K562 (cell line): ENCODE measurements at regions of chr1 and their contacts with region 1.

Region 1: DNA sequence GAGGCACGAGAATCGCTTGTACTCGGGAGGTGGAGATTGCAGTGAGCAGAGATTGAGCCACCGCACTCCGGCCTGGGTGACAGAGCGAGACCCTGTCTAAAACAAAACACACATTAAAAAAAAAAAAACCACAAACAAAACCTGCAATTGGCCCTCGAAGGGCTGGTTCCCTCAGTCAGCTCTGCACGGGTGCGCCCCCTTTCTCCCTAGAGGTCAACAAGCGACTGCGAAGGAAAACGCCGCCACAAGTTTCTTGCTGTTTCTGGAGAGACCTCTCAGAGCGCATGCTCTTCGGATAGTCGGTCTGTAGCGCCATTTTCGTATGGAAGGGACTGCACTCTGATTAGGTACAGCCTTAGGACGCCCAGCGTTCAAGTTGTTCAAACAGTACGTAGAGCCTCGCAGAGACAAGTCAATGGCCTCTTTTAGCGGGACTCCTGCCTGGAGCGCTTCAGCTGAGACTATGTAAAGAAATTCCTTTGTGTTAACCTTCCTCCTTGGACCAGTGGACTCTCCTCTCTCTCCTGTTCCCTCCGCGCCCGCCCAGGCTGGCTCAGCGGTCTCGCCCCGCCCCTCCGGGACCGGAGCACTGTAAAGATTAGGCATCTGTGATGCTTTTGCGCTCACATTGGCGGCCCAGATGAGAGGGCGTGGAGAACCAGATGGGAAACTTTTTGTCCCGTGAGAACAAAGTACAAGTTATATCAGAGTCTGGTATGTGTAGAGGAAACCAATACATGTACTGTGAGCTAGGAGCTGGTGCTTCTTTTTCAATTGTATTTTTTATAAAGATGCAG is 1.0 kb upstream of the CDC14A start:
- DNase-seq: peak; percentile 72 to 98 (median 82)
- ATAC-seq: peak; percentile 80
- H3K4me3 ChIP-seq: peak overlapping the region; percentile 91
- H3K27ac ChIP-seq: peak overlapping the region; percentile 98
- H3K4me1 ChIP-seq: peaks cover 21 to 43% of the 10 kb centered on the region in 2 experiments
- H3K27me3 ChIP-seq: no peaks in the 10 kb centered on the region
- CTCF ChIP-seq: peak; percentile 78 to 92 (median 79)
- EP300 ChIP-seq: no peak
- POLR2A ChIP-seq: peak; percentile 96
- RAD21 ChIP-seq: peak; percentile 36 to 51; a peak in 3 of 4 replicates

Region 2: GRCh38 chr1:99766378-99766800 is 584.9 kb before region 1 on chr1 and contains the start of gene FRRS1:
- CTCF ChIA-PET with region 1: no interaction called
- POLR2A ChIA-PET with region 1: no interaction called
- in situ Hi-C with region 1: no loop called
- intact Hi-C with region 1: loop called (anchors 5 kb)
- DNase-seq: peak; percentile 53 to 94 (median 64)
- ATAC-seq: peak; percentile 75
- H3K4me3 ChIP-seq: peak within 1 kb of the TSS; percentile 78
- H3K27ac ChIP-seq: peak within 1 kb of the TSS; percentile 99
- H3K4me1 ChIP-seq: peaks cover 14 to 38% of the 10 kb centered on the region in 2 experiments
- H3K27me3 ChIP-seq: no peaks in the 10 kb centered on the region
- CTCF ChIP-seq: peak in 1 of 3 experiments; percentile 7; a peak in 1 of 6 replicates
- EP300 ChIP-seq: peak; percentile 45; the same call in 1 of the 2 replicates
- POLR2A ChIP-seq: peak; percentile 80
- RAD21 ChIP-seq: no peak
- polyA plus RNA-seq, gene FRRS1: 0.87 to 1.9 TPM

Region 3: GRCh38 chr1:100132566-100133477 is 218.5 kb before region 1 on chr1 and contains the starts of genes SASS6 and TRMT13:
- CTCF ChIA-PET with region 1: no interaction called
- POLR2A ChIA-PET with region 1: no interaction called
- in situ Hi-C with region 1: no loop called
- intact Hi-C with region 1: loop called (anchors 5 kb)
- DNase-seq: peak; percentile 85 to 99 (median 88)
- ATAC-seq: peak; percentile 90
- H3K4me3 ChIP-seq: peak within 1 kb of the TSS; percentile 51
- H3K27ac ChIP-seq: peak within 1 kb of the TSS; percentile 79
- H3K4me1 ChIP-seq: peaks cover 3 to 10% of the 10 kb centered on the region in 2 experiments; a peak in 2 of 5 replicates
- H3K27me3 ChIP-seq: no peaks in the 10 kb centered on the region
- CTCF ChIP-seq: no peak
- EP300 ChIP-seq: peak; percentile 79
- POLR2A ChIP-seq: peak; percentile 84
- RAD21 ChIP-seq: no peak; a peak in 1 of 4 replicates
- polyA plus RNA-seq, gene SASS6: 14.7 to 16.4 TPM
- polyA plus RNA-seq, gene TRMT13: 24.2 to 24.3 TPM

Region 4: DNA sequence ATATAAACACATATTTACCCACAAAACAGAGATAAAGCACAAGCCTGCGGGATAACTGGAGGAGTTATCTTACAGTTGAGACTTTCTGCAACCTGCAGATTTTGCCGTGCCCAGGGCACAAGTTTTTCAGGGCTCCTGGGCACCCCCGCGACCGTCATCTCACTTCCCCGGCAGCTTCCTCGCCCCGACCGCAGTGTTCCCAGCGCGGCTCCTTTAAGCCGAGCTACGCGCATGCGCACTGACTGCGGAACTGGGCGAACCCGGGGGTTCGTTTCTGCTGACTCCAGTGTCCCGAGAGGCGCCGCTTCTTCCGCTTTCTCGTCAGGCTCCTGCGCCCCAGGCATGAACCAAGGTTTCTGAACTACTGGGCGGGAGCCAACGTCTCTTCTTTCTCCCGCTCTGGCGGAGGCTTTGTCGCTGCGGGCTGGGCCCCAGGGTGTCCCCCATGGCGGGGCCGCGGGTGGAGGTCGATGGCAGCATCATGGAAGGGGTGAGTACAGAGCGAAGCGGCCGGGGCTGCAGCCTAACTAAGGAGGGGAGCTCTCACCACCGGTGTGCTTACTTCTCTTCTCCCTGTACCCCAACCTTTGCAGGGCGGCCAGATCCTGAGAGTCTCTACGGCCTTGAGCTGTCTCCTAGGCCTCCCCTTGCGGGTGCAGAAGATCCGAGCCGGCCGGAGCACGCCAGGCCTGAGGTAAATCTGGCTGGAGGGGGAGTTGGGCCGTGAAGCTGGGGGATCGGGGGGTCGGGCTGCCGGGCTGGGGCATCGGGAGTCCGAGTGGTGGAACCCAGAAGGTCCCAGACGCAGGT is 85.2 kb before region 1 on chr1 and contains the start of gene RTCA:
- CTCF ChIA-PET with region 1: no interaction called
- POLR2A ChIA-PET with region 1: interaction called, 7 read pairs
- in situ Hi-C with region 1: no loop called
- intact Hi-C with region 1: loop called (anchors 5 kb)
- DNase-seq: peak; percentile 94 to 98 (median 96)
- ATAC-seq: peak; percentile 98
- H3K4me3 ChIP-seq: peak within 1 kb of the TSS; percentile 88
- H3K27ac ChIP-seq: peak within 1 kb of the TSS; percentile 87
- H3K4me1 ChIP-seq: peaks cover 4 to 6% of the 10 kb centered on the region in 2 experiments; a peak in 3 of 5 replicates
- H3K27me3 ChIP-seq: no peaks in the 10 kb centered on the region; a peak in 1 of 5 replicates
- CTCF ChIP-seq: 0 out of 6 replicates have a peak, but pooled peaks of 1 of the 3 experiments have one; percentile 2
- EP300 ChIP-seq: no peak
- POLR2A ChIP-seq: peak; percentile 89
- RAD21 ChIP-seq: no peak
- polyA plus RNA-seq, gene RTCA: 11.6 to 13.1 TPM

Region 5: GRCh38 chr1:100459358-100460114 is 108.2 kb after region 1 on chr1:
- CTCF ChIA-PET with region 1: no interaction called
- POLR2A ChIA-PET with region 1: interaction called, 4 read pairs
- in situ Hi-C with region 1: no loop called
- intact Hi-C with region 1: loop called (anchors 1 kb)
- DNase-seq: peak in 3 of 4 experiments; percentile 38 to 76 (median 57)
- ATAC-seq: peak; percentile 89
- H3K4me3 ChIP-seq: no peak overlapping the region
- H3K27ac ChIP-seq: no peak overlapping the region
- H3K4me1 ChIP-seq: peaks cover 0 to 6% of the 10 kb centered on the region in 2 experiments; a peak in 3 of 5 replicates
- H3K27me3 ChIP-seq: no peaks in the 10 kb centered on the region
- CTCF ChIP-seq: peak; percentile 72 to 86 (median 84)
- EP300 ChIP-seq: no peak
- POLR2A ChIP-seq: no peak
- RAD21 ChIP-seq: peak; percentile 90 to 91